CD4-positive, alpha-beta T cell (primary cell): ENCODE measurements at regions of chr3 and their contacts with region 1.

Region 1: GRCh38 chr3:192802957-192803899 is 75.9 kb upstream of the FGF12 start:
- DNase-seq: peak in 1 of 14 experiments; percentile 18
- ATAC-seq: no peak
- H3K4me3 ChIP-seq: no peak overlapping the region
- H3K4me3 Mint-ChIP-seq: no peak overlapping the region
- H3K27ac ChIP-seq: no peak overlapping the region
- H3K27ac Mint-ChIP-seq: no peak overlapping the region
- H3K4me1 ChIP-seq: no peaks in the 10 kb centered on the region
- H3K4me1 Mint-ChIP-seq: no peaks in the 10 kb centered on the region
- H3K27me3 ChIP-seq: no peaks in the 10 kb centered on the region
- H3K27me3 Mint-ChIP-seq: peaks cover 4% of the 10 kb centered on the region
- CTCF ChIP-seq: peak; percentile 16

Region 2: DNA sequence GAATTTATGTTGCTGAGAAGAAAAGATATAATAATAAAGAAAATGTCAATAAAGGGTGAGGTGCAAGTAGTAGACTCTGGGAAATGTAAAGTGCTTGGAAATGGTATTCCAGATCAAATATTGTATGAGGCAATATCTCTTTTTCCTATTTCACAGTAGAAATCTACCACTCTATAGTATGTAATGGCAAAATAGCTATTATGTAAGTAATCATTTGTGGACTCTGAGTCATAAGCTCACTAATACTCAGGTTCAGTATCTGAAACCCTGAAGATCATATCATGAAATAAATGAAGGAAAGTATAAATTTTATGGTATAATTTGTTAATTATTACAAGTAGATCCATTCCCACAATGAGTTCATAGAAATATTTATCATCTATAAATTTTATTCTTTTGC is 1020.2 kb before region 1 on chr3:
- CTCF ChIA-PET with region 1: no interaction called
- POLR2A ChIA-PET with region 1: no interaction called
- intact Hi-C with region 1: no loop called
- DNase-seq: no peak
- ATAC-seq: no peak
- H3K4me3 ChIP-seq: no peak overlapping the region
- H3K4me3 Mint-ChIP-seq: no peak overlapping the region
- H3K27ac ChIP-seq: no peak overlapping the region
- H3K27ac Mint-ChIP-seq: no peak overlapping the region
- H3K4me1 ChIP-seq: no peaks in the 10 kb centered on the region
- H3K4me1 Mint-ChIP-seq: no peaks in the 10 kb centered on the region
- H3K27me3 ChIP-seq: no peaks in the 10 kb centered on the region
- H3K27me3 Mint-ChIP-seq: no peaks in the 10 kb centered on the region
- CTCF ChIP-seq: no peak

Region 3: GRCh38 chr3:192467230-192468140 is 335.7 kb before region 1 on chr3:
- CTCF ChIA-PET with region 1: no interaction called
- POLR2A ChIA-PET with region 1: no interaction called
- intact Hi-C with region 1: loop called (anchors 2 to 5 kb)
- DNase-seq: peak; percentile 11 to 64 (median 25)
- ATAC-seq: peak; percentile 79
- H3K4me3 ChIP-seq: no peak overlapping the region
- H3K4me3 Mint-ChIP-seq: no peak overlapping the region
- H3K27ac ChIP-seq: no peak overlapping the region
- H3K27ac Mint-ChIP-seq: no peak overlapping the region
- H3K4me1 ChIP-seq: no peaks in the 10 kb centered on the region
- H3K4me1 Mint-ChIP-seq: no peaks in the 10 kb centered on the region
- H3K27me3 ChIP-seq: peaks cover 0 to 4% of the 10 kb centered on the region in 2 experiments
- H3K27me3 Mint-ChIP-seq: peaks cover 42% of the 10 kb centered on the region
- CTCF ChIP-seq: peak; percentile 77

Region 4: GRCh38 chr3:192566706-192567290 is 236.4 kb before region 1 on chr3:
- CTCF ChIA-PET with region 1: no interaction called
- POLR2A ChIA-PET with region 1: no interaction called
- intact Hi-C with region 1: loop called in 1 of 2 experiments (anchors 10 kb)
- DNase-seq: peak; percentile 17 to 68 (median 41)
- ATAC-seq: no peak
- H3K4me3 ChIP-seq: no peak overlapping the region
- H3K4me3 Mint-ChIP-seq: no peak overlapping the region
- H3K27ac ChIP-seq: no peak overlapping the region
- H3K27ac Mint-ChIP-seq: no peak overlapping the region
- H3K4me1 ChIP-seq: peaks cover 2% of the 10 kb centered on the region
- H3K4me1 Mint-ChIP-seq: no peaks in the 10 kb centered on the region
- H3K27me3 ChIP-seq: peaks cover 0 to 12% of the 10 kb centered on the region in 2 experiments
- H3K27me3 Mint-ChIP-seq: peaks cover 30% of the 10 kb centered on the region
- CTCF ChIP-seq: peak; percentile 46